ENCODE measurements at regions of chr12 and their contacts with region 1.

Region 1: DNA sequence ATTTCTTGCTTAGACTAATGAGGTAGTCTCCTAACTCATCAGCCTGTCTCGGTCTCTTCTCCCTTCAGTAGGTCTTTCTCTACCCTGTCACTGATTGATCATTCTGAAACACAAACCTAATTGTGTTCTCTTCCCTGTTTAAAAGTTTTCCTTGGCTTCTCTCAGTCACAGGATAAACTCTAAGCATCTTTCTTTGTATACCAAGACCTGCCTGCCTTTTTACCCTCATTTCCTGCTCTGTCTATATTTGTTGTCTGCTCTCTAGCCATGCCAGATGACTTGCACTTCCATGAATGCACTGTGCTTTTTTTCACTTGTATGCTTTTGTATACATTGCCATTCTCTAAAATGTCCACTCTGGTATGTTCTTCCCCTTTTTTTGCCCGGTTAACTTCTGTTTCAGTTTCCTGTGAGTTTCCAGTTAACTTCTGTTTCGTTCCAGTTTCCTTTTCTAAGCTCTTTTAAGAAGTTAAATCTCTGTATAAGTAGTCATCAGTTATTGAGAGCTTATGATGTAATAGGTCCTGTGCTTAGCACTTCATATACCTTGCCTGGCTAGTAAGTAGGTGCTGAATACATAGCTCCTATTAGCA is 12.8 kb downstream of the DIP2B start:
- DNase-seq: peak; percentile 84
- ATAC-seq: peak; percentile 86
- H3K4me3 ChIP-seq: peak overlapping the region; percentile 15; the same call in 1 of the 2 replicates
- H3K27ac ChIP-seq: peak overlapping the region; percentile 75
- H3K4me1 ChIP-seq: peaks cover 66% of the 10 kb centered on the region
- H3K27me3 ChIP-seq: no peaks in the 10 kb centered on the region
- CTCF ChIP-seq: no peak
- EP300 ChIP-seq: no peak
- POLR2A ChIP-seq: peak; percentile 26; the same call in 1 of the 2 replicates
- RAD21 ChIP-seq: no peak

Region 2: DNA sequence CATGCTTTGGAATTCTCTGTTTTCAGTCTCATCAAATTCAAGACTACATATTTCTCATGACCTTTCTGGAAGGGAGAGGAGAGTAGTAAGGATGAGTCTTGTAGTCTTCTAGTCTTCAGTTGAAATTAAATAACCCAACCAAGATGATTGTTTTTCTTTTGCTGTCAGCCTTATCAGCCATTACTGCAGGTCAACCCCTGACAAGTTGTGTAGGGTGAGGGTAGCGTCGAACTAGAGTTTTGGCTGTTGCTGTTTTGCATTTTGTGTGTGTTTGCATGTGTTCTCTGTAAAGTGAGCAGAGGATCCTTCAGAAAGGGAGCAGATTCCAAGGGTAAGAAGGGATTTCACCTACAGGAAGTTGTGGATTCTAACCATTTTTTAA is 15.6 kb after region 1 on chr12:
- CTCF ChIA-PET with region 1: interaction called, 12 read pairs
- POLR2A ChIA-PET with region 1: interaction called, 11 read pairs
- RAD21 ChIA-PET with region 1: interaction called, 12 read pairs
- SMC1A ChIA-PET with region 1: interaction called, 23 read pairs
- in situ Hi-C with region 1: no loop called
- intact Hi-C with region 1: loop called (anchors 1 kb)
- DNase-seq: no peak
- ATAC-seq: peak; percentile 2
- H3K4me3 ChIP-seq: no peak overlapping the region; the same call in 1 of the 2 replicates
- H3K27ac ChIP-seq: peak overlapping the region; percentile 96
- H3K4me1 ChIP-seq: peaks cover 57% of the 10 kb centered on the region
- H3K27me3 ChIP-seq: no peaks in the 10 kb centered on the region
- CTCF ChIP-seq: no peak
- EP300 ChIP-seq: no peak
- POLR2A ChIP-seq: no peak
- RAD21 ChIP-seq: no peak

Region 3: GRCh38 chr12:50542448-50542847 is 24.9 kb after region 1 on chr12:
- CTCF ChIA-PET with region 1: interaction called, 5 read pairs
- POLR2A ChIA-PET with region 1: interaction called, 11 read pairs
- RAD21 ChIA-PET with region 1: interaction called, 12 read pairs
- SMC1A ChIA-PET with region 1: interaction called, 11 read pairs
- in situ Hi-C with region 1: no loop called
- intact Hi-C with region 1: no loop called
- DNase-seq: no peak
- ATAC-seq: peak; percentile 89
- H3K4me3 ChIP-seq: no peak overlapping the region
- H3K27ac ChIP-seq: peak overlapping the region; percentile 39
- H3K4me1 ChIP-seq: peaks cover 19% of the 10 kb centered on the region; the same call in 1 of the 2 replicates
- H3K27me3 ChIP-seq: no peaks in the 10 kb centered on the region
- CTCF ChIP-seq: no peak
- EP300 ChIP-seq: no peak
- POLR2A ChIP-seq: no peak
- RAD21 ChIP-seq: no peak

Region 4: DNA sequence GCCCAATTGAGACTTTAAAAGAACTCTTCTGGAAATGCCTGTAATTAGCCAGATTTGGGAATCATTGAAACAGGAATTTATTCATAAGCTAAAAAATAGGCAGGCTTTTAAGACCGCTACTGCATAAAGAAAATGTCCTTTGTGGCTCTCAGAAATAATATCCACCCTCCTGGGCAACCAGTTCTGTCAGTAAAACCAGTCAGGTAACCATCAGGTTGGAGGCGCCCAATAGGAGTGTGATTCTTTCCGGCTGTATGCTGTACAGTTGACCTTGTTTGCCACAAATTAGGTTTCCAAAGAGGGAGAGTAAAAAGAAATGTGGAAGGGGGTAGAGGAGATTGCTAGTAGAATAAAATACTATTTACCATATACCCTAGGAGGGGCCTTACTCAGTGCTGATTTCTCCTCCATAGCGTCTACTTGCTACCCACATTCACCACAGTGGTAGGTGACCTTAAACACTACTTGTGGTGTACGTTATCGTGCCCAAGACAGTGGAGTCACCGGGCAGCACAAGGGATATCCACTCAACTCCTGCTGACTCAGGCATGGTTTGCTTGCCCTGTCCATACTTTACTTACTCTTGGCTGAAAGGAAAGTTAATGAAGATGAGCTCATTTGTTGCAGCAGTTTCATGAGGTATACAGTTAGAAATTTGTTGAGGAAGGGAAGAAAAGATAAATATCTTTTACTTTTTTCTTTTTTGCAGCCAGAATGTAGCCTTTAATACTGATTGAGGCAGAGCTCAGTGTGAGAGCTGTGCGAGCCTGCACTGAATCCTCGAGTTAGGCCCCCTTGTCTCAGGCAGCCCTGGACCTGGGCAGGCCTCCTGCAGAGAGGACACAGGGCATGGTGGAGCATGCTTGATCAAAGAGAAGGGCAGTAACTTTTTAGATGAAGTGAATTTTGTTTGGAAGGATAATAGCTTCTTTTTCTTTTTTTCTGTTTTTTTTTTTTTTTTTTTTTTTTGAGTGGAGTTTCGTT is 63.9 kb after region 1 on chr12:
- CTCF ChIA-PET with region 1: interaction called, 4 read pairs
- POLR2A ChIA-PET with region 1: no interaction called
- RAD21 ChIA-PET with region 1: interaction called, 3 read pairs
- SMC1A ChIA-PET with region 1: interaction called, 3 read pairs
- in situ Hi-C with region 1: no loop called
- intact Hi-C with region 1: loop called (anchors 5 kb)
- DNase-seq: no peak
- ATAC-seq: no peak
- H3K4me3 ChIP-seq: no peak overlapping the region
- H3K27ac ChIP-seq: no peak overlapping the region; the same call in 1 of the 2 replicates
- H3K4me1 ChIP-seq: peaks cover 14% of the 10 kb centered on the region
- H3K27me3 ChIP-seq: no peaks in the 10 kb centered on the region
- CTCF ChIP-seq: no peak
- EP300 ChIP-seq: no peak
- POLR2A ChIP-seq: no peak
- RAD21 ChIP-seq: no peak

Region 5: GRCh38 chr12:50776749-50777728 is 259.5 kb after region 1 on chr12:
- CTCF ChIA-PET with region 1: no interaction called
- POLR2A ChIA-PET with region 1: no interaction called
- RAD21 ChIA-PET with region 1: no interaction called
- SMC1A ChIA-PET with region 1: no interaction called
- in situ Hi-C with region 1: no loop called
- intact Hi-C with region 1: no loop called
- DNase-seq: no peak
- ATAC-seq: no peak; the same call in 2 of the 3 replicates
- H3K4me3 ChIP-seq: no peak overlapping the region
- H3K27ac ChIP-seq: no peak overlapping the region
- H3K4me1 ChIP-seq: no peaks in the 10 kb centered on the region
- H3K27me3 ChIP-seq: no peaks in the 10 kb centered on the region
- CTCF ChIP-seq: no peak
- EP300 ChIP-seq: no peak
- POLR2A ChIP-seq: no peak
- RAD21 ChIP-seq: no peak

Measured in GM12878 (cell line).